ENCODE measurements at regions of chr18 and their contacts with region 1.

Region 1: GRCh38 chr18:62522504-62523254 is at the start of gene ZCCHC2:
- DNase-seq: peak; percentile 90
- H3K4me3 ChIP-seq: peak within 1 kb of the TSS; percentile 87
- H3K27ac ChIP-seq: peak within 1 kb of the TSS; percentile 78
- H3K4me1 ChIP-seq: peaks cover 9% of the 10 kb centered on the region
- CTCF ChIP-seq: no peak
- total RNA-seq, gene ZCCHC2: 13.5 and 17.5 TPM in 2 replicates

Region 2: DNA sequence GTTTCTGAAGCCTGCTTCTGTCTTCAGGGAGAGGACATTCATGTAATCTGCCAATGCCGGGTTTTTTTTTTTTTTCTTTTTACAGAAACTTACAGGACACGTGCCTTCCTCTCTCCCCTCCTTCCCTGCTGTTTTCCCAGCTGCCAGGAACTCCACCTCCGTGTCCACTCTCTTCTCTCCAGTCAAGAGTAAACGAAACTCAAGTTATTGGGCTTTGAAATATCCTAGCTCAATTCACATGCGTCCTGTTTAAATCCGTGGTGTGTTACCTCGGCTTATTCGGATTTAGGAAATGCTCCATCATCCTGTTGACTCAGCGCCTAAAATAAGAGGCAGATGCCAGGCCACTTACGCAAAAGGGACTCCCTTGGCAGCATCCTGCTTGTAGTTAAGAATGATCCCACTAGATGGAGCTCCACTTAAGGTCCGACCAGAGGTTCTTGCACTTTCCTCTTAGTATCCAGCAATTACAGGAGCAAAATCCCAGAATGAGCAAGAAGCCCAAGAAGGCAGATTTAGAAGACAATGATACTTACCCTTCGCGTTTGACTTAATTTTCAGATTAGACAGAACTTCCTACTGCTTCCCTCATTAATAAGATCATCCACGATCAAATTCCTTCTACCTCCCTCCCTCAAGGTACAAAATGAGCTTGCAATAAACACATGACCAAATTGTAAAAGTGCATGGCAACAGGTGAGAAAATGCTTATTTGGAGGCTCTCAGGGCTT is 97.0 kb before region 1 on chr18:
- CTCF ChIA-PET with region 1: no interaction called
- POLR2A ChIA-PET with region 1: no interaction called
- intact Hi-C with region 1: loop called (anchors 5 kb)
- DNase-seq: peak; percentile 58
- H3K4me3 ChIP-seq: no peak overlapping the region
- H3K27ac ChIP-seq: no peak overlapping the region
- H3K4me1 ChIP-seq: no peaks in the 10 kb centered on the region
- CTCF ChIP-seq: peak; percentile 77

Measured in OCI-LY7 (cell line).